Breast epithelium (tissue), 4 donors: ENCODE measurements at regions of chr11 and their contacts with region 1.

Region 1: GRCh38 chr11:65613929-65614674 is at the start of gene MAP3K11:
- DNase-seq: peak; percentile 94 to 95
- H3K4me3 ChIP-seq: peak within 1 kb of the TSS; percentile 95 to 97 (median 97)
- H3K27ac ChIP-seq: peak within 1 kb of the TSS; percentile 93 to 97
- H3K4me1 ChIP-seq: peaks cover 12 to 29% of the 10 kb centered on the region in 2 donors
- H3K27me3 ChIP-seq: no peaks in the 10 kb centered on the region
- CTCF ChIP-seq: peak in 1 of 3 donors; percentile 21
- POLR2A ChIP-seq: peak; percentile 69
- total RNA-seq, gene MAP3K11: 30.4 to 39.0 (median 36.7) TPM

Region 2: GRCh38 chr11:65575568-65576231 is 38.4 kb before region 1 on chr11 and contains the start of gene EHBP1L1:
- intact Hi-C with region 1: loop called (anchors 5 kb)
- DNase-seq: no peak
- H3K4me3 ChIP-seq: peak within 1 kb of the TSS; percentile 60 to 91 (median 75)
- H3K27ac ChIP-seq: peak within 1 kb of the TSS; percentile 96 to 97
- H3K4me1 ChIP-seq: peaks cover 37 to 38% of the 10 kb centered on the region in 2 donors
- H3K27me3 ChIP-seq: no peaks in the 10 kb centered on the region
- CTCF ChIP-seq: no peak
- POLR2A ChIP-seq: no peak
- total RNA-seq, gene EHBP1L1: 28.0 to 68.8 (median 33.4) TPM